Activated CD4-positive, alpha-beta memory T cell treated with anti-CD3 and anti-CD28 coated beads, Interleukin-2, amount 10 ng/mL, durations not matched to agents 7 days and 5 days (primary cell): ENCODE measurements at regions of chr18 and their contacts with region 1.

Region 1: DNA sequence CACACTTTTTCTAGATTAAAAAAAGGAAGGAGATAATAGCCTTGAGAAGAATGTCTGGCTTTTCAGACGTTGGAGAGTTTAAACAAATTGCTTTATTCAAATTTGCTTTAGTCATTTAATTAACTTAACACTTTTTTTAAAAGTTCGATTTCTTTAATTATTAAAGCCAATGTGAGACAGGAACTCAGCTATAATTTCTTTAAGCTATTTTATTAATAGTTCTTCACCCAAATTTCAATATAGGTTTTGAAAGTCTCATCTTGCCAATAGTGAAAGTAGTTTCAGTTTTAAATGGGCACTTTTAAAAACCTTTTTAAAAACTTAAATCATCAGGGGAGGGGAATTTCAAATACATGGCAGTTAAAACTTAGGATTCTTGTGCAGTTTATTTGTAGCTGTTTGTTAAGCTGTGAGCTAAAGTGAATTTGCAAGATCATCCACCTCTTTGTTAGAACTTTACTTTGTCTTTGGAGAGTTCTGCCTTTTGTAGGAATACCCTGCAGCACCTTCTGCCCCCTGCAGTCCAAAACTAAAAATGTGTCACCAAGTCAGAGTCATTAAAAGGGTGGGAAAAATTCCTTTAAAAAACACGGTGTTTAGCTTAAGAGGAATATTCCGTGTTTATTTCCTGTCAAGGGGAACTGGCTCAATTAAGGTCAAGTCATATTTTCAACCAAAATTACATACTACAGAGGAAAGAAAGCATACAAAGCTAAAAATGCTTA is 4.6 kb downstream of the TGIF1 start:
- DNase-seq: peak; percentile 33
- H3K4me3 Mint-ChIP-seq: peak overlapping the region; percentile 92
- H3K27ac Mint-ChIP-seq: peak overlapping the region; percentile 96
- H3K4me1 Mint-ChIP-seq: peaks cover 65% of the 10 kb centered on the region
- H3K27me3 Mint-ChIP-seq: no peaks in the 10 kb centered on the region

Region 2: GRCh38 chr18:3261371-3262246 is 192.9 kb before region 1 on chr18 and contains the start of gene MYL12B:
- CTCF ChIA-PET with region 1: interaction called, 10 read pairs
- POLR2A ChIA-PET with region 1: interaction called, 15 read pairs
- DNase-seq: peak; percentile 86
- H3K4me3 Mint-ChIP-seq: peak within 1 kb of the TSS; percentile 89
- H3K27ac Mint-ChIP-seq: peak within 1 kb of the TSS; percentile 99
- H3K4me1 Mint-ChIP-seq: peaks cover 71% of the 10 kb centered on the region
- H3K27me3 Mint-ChIP-seq: no peaks in the 10 kb centered on the region
- total RNA-seq, gene MYL12B: 371 to 378 TPM

Region 3: GRCh38 chr18:3281456-3282400 is 172.8 kb before region 1 on chr18:
- CTCF ChIA-PET with region 1: interaction called, 17 read pairs
- POLR2A ChIA-PET with region 1: no interaction called
- DNase-seq: no peak
- H3K4me3 Mint-ChIP-seq: no peak overlapping the region
- H3K27ac Mint-ChIP-seq: no peak overlapping the region
- H3K4me1 Mint-ChIP-seq: no peaks in the 10 kb centered on the region
- H3K27me3 Mint-ChIP-seq: no peaks in the 10 kb centered on the region

Region 4: DNA sequence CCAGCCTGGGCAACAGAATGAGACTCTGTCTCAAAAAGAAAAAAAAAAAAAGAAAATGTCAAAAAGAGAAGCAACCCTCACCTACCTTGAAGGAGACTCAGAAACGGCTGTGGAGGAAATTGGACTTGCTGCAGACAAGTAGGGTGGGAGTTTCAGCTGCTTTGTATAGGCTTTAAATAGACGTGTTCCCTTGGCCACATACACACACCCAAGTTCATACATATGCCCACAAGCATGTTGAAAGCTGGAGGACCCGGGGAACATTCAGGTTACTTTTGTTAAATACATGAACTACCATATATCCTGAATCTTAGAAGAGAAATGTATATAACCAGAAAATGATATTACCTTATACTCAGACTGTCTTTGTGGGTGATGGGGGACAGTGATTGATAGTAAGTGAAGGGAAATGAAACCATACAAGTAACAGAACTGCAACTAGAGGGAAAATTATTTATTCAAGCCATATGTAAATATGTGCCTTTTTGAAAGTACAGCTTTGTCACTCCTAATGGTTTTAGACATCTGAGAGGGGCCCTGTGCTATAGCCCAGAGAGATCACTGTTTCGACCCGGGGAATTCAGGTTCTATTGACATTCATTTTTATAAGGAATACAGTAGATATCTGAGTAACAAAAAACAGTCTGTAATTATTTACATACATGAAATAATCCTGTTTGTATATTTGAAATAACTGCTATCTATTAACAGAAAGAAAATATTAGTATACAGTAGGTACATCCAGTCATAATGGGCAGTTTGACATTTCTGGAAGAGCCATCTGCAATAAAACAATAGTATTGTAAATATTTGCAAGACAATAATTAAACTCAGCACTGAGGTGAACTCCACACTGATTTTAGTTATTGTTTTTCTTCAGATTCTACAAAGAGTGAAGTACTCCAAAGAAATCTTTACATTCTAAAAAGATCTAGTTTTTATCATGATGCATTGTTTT is 52.6 kb before region 1 on chr18:
- CTCF ChIA-PET with region 1: no interaction called
- POLR2A ChIA-PET with region 1: no interaction called
- DNase-seq: no peak
- H3K4me3 Mint-ChIP-seq: no peak overlapping the region
- H3K27ac Mint-ChIP-seq: no peak overlapping the region
- H3K4me1 Mint-ChIP-seq: peaks cover 4% of the 10 kb centered on the region
- H3K27me3 Mint-ChIP-seq: no peaks in the 10 kb centered on the region

Region 5: GRCh38 chr18:3466045-3466444 is 11.5 kb after region 1 on chr18:
- CTCF ChIA-PET with region 1: interaction called, 22 read pairs
- POLR2A ChIA-PET with region 1: interaction called, 40 read pairs
- DNase-seq: no peak
- H3K4me3 Mint-ChIP-seq: no peak overlapping the region
- H3K27ac Mint-ChIP-seq: no peak overlapping the region
- H3K4me1 Mint-ChIP-seq: peaks cover 11% of the 10 kb centered on the region
- H3K27me3 Mint-ChIP-seq: no peaks in the 10 kb centered on the region

Region 6: DNA sequence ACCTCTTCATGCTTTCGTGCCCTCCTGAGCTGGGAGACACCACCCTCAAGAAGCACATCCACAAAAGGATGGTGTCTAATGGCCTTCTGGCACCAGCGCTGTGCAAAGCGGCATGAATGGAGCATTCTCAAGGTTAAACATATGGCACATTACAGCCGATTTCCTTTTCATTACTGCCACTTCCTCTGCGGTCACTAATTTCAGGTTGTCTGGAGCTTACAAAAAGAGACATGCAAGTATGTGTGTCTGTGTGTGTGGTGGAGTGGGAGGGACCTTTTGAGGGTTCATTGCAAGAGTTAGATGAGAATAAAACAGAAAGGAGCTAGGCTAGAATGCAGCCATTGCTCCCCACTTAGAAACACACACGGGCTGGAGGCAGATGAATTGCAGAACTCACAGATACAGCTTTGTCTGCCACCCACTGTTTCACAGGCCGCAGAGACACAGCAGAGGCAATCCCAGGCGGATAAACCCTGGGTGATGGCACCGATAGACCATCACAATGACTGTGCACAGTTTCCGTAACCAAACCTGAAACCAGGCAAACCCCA is 71.4 kb after region 1 on chr18:
- CTCF ChIA-PET with region 1: no interaction called
- POLR2A ChIA-PET with region 1: interaction called, 13 read pairs
- DNase-seq: peak; percentile 60
- H3K4me3 Mint-ChIP-seq: peak overlapping the region; percentile 33
- H3K27ac Mint-ChIP-seq: peak overlapping the region; percentile 27
- H3K4me1 Mint-ChIP-seq: peaks cover 17% of the 10 kb centered on the region
- H3K27me3 Mint-ChIP-seq: peaks cover 7% of the 10 kb centered on the region

Region 7: GRCh38 chr18:3585656-3586509 is 131.4 kb after region 1 on chr18:
- CTCF ChIA-PET with region 1: interaction called, 21 read pairs
- POLR2A ChIA-PET with region 1: interaction called, 8 read pairs
- DNase-seq: peak; percentile 79
- H3K4me3 Mint-ChIP-seq: no peak overlapping the region
- H3K27ac Mint-ChIP-seq: no peak overlapping the region
- H3K4me1 Mint-ChIP-seq: peaks cover 37% of the 10 kb centered on the region
- H3K27me3 Mint-ChIP-seq: no peaks in the 10 kb centered on the region

Region 8: DNA sequence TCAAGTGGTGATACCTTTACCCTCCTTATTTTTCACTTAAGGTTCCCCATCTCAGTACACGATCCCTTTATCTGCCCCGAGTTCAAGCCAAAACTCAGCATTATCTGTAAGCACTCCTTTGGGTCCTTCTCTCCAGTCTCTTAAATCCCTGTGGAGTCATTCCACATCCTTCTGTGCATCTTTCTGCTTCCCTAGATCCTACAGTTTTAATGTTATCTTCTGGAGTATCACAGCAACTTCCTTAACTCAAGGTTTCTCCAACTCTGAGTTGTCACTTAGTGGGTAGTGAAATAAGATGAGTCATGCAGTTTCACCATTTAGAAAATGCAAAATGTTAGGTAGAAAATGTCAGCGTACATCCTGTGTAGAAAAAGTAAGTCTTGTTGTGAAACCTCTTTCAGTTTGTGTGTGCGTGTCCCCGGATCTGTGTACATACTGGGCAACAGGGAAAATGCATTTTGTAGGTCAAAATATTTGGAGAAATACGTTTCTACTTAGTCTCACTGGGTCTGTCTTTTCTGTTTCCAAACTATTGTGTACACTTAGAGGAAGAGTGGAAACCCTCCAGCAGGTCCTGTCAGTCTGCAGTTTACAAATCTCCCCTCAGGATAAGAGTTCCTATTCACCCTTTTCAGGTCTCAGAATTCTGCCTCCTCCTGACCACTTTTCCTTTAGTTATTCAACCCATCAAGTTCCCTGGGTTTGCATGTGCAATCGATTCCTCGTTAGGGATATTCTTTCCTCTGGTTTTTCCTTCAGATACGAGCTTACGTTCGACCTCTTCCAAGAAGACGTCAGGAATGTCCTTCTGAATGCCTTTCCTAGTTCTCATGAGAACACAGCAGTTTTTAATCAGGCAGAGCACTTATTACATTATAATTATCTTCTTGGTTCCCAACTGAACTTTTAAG is 150.2 kb after region 1 on chr18:
- CTCF ChIA-PET with region 1: interaction called, 5 read pairs
- POLR2A ChIA-PET with region 1: interaction called, 66 read pairs
- DNase-seq: peak; percentile 50
- H3K4me3 Mint-ChIP-seq: no peak overlapping the region
- H3K27ac Mint-ChIP-seq: no peak overlapping the region
- H3K4me1 Mint-ChIP-seq: peaks cover 18% of the 10 kb centered on the region
- H3K27me3 Mint-ChIP-seq: no peaks in the 10 kb centered on the region

Region 9: DNA sequence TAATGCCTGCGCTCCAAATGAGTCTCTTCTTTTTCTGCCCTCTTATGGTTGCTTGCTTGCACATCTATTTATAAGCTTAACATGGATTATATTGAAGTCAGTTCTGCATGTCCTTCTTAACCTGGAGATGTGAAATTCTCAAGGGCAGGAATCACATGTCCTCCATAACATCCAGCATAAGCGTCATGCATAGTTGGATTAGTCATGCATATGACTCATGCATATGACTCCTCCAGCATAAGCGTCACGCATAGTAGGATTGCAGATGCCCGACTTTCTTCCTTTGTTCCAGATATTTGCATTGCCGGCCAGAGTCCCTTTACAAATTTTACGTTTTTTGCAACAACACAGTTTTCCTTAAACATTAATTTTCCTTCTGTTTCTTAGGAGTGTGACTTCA is 304.0 kb after region 1 on chr18:
- CTCF ChIA-PET with region 1: no interaction called
- POLR2A ChIA-PET with region 1: no interaction called
- DNase-seq: no peak
- H3K4me3 Mint-ChIP-seq: no peak overlapping the region
- H3K27ac Mint-ChIP-seq: no peak overlapping the region
- H3K4me1 Mint-ChIP-seq: no peaks in the 10 kb centered on the region
- H3K27me3 Mint-ChIP-seq: no peaks in the 10 kb centered on the region